ENCODE measurements at regions of chr17 and their contacts with region 1.

Region 1: GRCh38 chr17:42517516-42517915 is 18.5 kb upstream of the NAGLU start:
- DNase-seq: peak; percentile 84
- H3K4me3 Mint-ChIP-seq: no peak overlapping the region
- H3K27ac Mint-ChIP-seq: peak overlapping the region; percentile 26
- H3K4me1 Mint-ChIP-seq: peaks cover 1% of the 10 kb centered on the region
- H3K27me3 Mint-ChIP-seq: peaks cover 26% of the 10 kb centered on the region

Region 2: GRCh38 chr17:42200702-42201101 is 316.8 kb before region 1 on chr17:
- CTCF ChIA-PET with region 1: no interaction called
- POLR2A ChIA-PET with region 1: no interaction called
- DNase-seq: no peak
- H3K4me3 Mint-ChIP-seq: no peak overlapping the region
- H3K27ac Mint-ChIP-seq: no peak overlapping the region
- H3K4me1 Mint-ChIP-seq: no peaks in the 10 kb centered on the region
- H3K27me3 Mint-ChIP-seq: no peaks in the 10 kb centered on the region

Region 3: GRCh38 chr17:42322382-42323267 is 194.9 kb before region 1 on chr17:
- CTCF ChIA-PET with region 1: interaction called, 12 read pairs
- POLR2A ChIA-PET with region 1: no interaction called
- DNase-seq: peak; percentile 95
- H3K4me3 Mint-ChIP-seq: no peak overlapping the region
- H3K27ac Mint-ChIP-seq: no peak overlapping the region
- H3K4me1 Mint-ChIP-seq: peaks cover 50% of the 10 kb centered on the region
- H3K27me3 Mint-ChIP-seq: no peaks in the 10 kb centered on the region

Region 4: DNA sequence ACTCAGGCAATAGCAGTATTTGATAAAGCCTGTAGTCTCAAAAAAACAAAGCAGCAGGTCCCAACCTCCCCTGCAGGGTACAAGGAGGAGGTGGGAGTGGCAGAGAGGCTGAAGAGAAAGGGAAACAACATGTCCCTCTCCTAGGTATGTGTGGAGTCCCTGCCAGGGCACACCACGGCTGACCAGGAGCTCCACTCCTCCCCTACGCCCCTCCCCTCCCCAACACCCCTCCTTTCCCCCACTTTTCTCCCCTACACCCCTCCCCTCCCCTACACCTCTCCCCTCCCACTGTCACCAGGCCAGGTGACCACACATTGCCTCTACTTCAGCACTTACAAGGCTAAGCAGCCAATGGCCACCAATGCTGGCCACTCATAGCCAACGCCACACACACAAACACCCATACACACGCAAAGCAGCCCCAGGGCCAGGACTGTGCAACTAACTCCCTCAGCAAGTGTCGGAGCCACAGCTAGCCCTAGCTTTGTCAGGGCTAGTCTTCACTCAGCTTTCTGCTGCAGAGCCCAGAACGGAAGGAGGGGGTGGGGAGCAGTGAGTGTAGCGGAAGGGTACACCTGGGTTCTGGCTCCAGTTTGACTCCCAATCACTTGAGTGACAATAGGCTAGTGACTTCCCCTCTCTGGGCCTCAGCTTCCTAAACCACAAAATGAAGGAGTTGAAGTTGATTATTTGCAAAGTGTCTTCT is 102.7 kb before region 1 on chr17:
- CTCF ChIA-PET with region 1: interaction called, 10 read pairs
- POLR2A ChIA-PET with region 1: no interaction called
- DNase-seq: peak; percentile 57
- H3K4me3 Mint-ChIP-seq: peak overlapping the region; percentile 53
- H3K27ac Mint-ChIP-seq: no peak overlapping the region
- H3K4me1 Mint-ChIP-seq: peaks cover 11% of the 10 kb centered on the region
- H3K27me3 Mint-ChIP-seq: peaks cover 11% of the 10 kb centered on the region

Region 5: DNA sequence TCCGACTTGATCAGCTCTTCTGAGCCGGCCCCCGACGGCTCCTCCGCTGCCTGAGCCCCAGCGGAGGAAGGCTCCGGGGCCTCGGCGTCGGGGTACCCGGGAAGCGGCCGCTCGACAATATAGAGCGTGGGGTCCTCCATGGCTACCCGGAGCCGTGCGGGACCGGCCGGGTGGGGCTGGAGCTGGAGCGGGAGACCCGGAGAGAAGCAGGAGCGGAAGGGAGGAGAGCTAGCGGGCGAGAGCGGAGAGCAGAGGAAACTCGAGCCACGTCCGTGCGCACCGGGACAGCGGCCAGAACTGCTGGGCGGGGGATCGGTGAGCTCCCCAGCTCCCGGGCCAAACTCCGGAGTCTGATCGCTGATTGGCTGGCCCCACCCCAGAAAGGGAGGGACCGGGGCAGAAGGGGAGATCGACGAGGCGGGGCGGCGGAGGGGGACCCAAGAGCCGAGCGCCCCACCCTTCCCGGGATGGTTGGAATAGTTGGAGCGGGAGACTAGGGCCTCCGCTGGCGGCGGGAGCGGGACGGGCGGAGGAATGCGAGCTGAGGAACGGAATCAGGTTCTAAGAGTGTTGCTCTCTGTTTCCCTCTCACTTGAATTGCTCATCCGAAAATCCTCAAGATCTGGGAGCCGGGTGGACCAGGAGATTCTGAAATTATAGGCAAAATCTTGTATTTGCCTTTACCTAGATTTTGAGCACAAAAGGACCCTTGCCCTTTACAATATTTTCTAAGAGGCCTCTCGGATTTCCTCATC is 94.4 kb before region 1 on chr17 and contains the start of gene CAVIN1:
- CTCF ChIA-PET with region 1: interaction called, 15 read pairs
- POLR2A ChIA-PET with region 1: no interaction called
- DNase-seq: peak; percentile 29
- H3K4me3 Mint-ChIP-seq: peak within 1 kb of the TSS; percentile 70
- H3K27ac Mint-ChIP-seq: no peak within 1 kb of the TSS
- H3K4me1 Mint-ChIP-seq: peaks cover 22% of the 10 kb centered on the region
- H3K27me3 Mint-ChIP-seq: peaks cover 53% of the 10 kb centered on the region
- total RNA-seq, gene CAVIN1: 1.0 to 1.1 TPM

Region 6: DNA sequence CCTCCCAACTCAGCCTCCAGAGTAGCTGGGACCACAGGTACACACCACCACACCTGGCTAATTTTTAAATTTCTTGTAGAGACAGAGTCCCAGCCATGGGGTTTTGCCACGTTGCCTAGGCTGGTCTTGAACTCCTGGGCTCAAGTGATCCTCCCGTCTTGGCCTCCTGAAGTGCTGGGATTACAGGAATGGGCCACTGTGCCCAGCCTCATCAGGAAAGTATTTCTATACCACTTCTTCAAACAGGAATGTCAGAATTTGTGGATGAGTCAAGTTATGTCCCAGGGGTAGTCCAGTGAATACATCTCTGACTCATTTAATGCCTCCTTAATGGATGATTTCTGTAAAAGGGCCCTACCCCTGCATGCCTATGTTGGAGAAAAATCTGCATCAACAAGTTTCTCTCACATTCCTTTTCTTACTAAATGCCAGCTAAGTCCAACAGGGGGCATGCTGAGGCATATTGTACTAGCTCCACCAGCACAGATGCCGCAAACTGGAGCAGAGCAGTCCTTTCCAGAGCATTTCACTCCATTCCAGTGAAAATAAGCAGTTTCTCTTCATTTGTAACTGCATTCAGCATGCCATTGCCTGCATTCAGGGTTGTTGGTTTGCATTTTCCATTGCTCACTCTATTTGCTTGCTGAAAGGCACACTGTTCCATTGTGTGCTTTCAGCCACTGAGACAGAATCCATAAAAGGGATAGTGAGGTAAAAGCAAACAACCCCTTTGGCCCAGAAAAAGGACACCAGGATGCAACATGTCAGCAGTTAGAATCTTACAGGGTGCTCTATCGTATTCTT is 89.2 kb before region 1 on chr17:
- CTCF ChIA-PET with region 1: interaction called, 15 read pairs
- POLR2A ChIA-PET with region 1: no interaction called
- DNase-seq: peak; percentile 38
- H3K4me3 Mint-ChIP-seq: no peak overlapping the region
- H3K27ac Mint-ChIP-seq: no peak overlapping the region
- H3K4me1 Mint-ChIP-seq: peaks cover 1% of the 10 kb centered on the region
- H3K27me3 Mint-ChIP-seq: peaks cover 45% of the 10 kb centered on the region

Measured in activated CD4-positive, alpha-beta memory T cell treated with anti-CD3 and anti-CD28 coated beads, Interleukin-2, amount 10 ng/mL, durations not matched to agents 7 days and 5 days (primary cell).